Activated CD8-positive, alpha-beta T cell treated with anti-CD3 and anti-CD28 coated beads, Interleukin-2, amount 10 ng/mL, durations not matched to agents 7 days and 5 days (primary cell): ENCODE measurements at regions of chr3 and their contacts with region 1.

Region 1: DNA sequence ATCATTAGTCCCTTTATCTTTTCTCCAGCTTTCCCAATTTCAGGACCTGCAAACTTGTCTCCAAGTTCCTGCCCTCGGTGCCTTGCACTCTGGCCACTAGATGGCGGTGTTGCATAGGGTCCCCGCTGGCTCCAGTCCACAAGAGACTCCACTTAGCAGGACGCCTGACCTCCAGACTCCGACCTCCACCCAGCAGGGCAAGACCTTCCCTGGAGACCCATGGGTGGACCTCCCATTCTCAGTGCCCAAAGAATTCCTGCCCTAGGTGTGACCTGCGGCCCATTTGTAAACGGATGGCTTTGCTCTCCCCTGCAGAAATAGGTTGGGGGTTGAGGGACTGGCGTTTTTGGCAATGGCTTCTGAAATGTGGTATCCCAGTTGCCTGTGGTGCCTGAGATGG is 82.6 kb downstream of the LSM3 start:
- DNase-seq: peak; percentile 79
- ATAC-seq: peak; percentile 73
- H3K4me3 Mint-ChIP-seq: no peak overlapping the region
- H3K27ac Mint-ChIP-seq: no peak overlapping the region
- H3K4me1 Mint-ChIP-seq: no peaks in the 10 kb centered on the region
- H3K27me3 Mint-ChIP-seq: peaks cover 15% of the 10 kb centered on the region

Region 2: DNA sequence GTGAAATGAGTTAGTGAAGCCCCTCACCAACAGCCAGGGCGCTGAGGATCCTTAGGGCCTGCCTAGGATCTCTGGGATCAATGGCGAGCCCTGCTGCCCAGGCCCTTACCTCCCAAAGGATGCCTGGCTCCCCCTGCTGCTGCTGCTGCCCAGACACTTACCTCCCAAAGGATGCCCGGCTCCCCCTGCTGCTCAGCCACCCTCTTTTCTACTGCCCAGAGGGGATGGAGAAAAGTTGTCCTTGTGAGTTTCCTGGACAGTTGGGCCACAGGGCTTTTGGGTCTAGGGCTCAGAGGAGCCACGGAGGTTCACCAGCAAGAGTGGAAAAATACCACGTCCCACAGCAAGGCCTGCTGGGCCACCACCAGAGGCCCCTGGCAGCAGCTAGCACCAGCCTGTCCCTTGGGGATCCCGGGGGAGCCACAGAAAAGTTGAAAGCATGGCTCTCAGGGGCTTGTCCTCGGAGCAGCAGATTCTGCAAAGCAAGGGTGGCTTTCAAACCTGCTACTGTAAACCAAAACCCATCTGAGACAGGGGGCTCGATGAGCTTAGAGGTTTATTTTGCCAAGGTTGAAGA is 200.6 kb after region 1 on chr3:
- CTCF ChIA-PET with region 1: interaction called, 30 read pairs
- POLR2A ChIA-PET with region 1: no interaction called
- DNase-seq: peak; percentile 59
- ATAC-seq: peak; percentile 77
- H3K4me3 Mint-ChIP-seq: no peak overlapping the region
- H3K27ac Mint-ChIP-seq: peak overlapping the region; percentile 65
- H3K4me1 Mint-ChIP-seq: peaks cover 12% of the 10 kb centered on the region
- H3K27me3 Mint-ChIP-seq: no peaks in the 10 kb centered on the region

Region 3: DNA sequence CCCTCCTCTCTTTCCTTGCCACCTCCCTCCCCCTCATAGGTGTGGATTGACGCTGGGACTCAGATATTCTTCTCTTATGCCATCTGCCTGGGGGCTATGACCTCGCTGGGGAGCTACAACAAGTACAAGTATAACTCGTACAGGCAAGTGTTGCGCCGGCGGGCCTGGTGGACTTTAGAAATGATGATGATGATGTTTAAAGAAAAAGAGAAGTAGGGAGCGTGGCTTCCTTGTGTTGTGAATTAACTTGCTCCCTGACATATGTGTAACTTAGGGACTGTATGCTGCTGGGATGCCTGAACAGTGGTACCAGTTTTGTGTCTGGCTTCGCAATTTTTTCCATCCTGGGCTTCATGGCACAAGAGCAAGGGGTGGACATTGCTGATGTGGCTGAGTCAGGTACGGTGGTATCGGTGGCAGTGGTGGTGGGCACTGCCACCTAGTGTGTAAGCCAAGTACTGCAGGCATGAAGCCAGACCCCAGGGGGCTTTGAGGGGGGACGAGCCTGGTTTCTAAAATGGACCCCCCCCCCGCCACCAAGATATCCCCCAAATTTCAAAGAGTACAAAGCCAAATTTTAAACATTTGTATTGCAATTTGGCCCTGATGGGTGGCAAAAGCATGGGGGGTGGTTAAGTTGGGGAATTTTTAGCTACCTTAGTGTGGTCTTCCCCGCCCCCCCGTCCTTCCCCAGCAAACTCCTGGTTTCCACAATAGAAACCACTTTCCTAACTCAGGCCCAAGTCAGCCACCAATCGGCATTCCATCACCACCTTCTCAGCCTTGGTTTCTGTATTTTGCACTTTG is 206.8 kb after region 1 on chr3:
- CTCF ChIA-PET with region 1: interaction called, 30 read pairs
- POLR2A ChIA-PET with region 1: no interaction called
- DNase-seq: peak; percentile 44
- ATAC-seq: peak; percentile 48
- H3K4me3 Mint-ChIP-seq: no peak overlapping the region
- H3K27ac Mint-ChIP-seq: peak overlapping the region; percentile 30
- H3K4me1 Mint-ChIP-seq: peaks cover 3% of the 10 kb centered on the region
- H3K27me3 Mint-ChIP-seq: no peaks in the 10 kb centered on the region